Heart left ventricle (tissue), 16 donors: ENCODE measurements at regions of chr14 and their contacts with region 1.

Region 1: GRCh38 chr14:67269298-67270061 is 28.2 kb downstream of the PALS1 start:
- DNase-seq: peak in 1 of 5 donors; percentile 21
- ATAC-seq: peak in 3 of 4 donors; percentile 38 to 65 (median 56)
- H3K4me3 ChIP-seq: peak overlapping the region in 5 of 12 donors; percentile 11 to 39 (median 30)
- H3K27ac ChIP-seq: peak overlapping the region in 6 of 12 donors; percentile 5 to 78 (median 30)
- H3K4me1 ChIP-seq: peaks cover 0 to 46% (median 33%) of the 10 kb centered on the region in 12 donors
- H3K27me3 ChIP-seq: no peaks in the 10 kb centered on the region
- CTCF ChIP-seq: no peak
- POLR2A ChIP-seq: no peak

Region 2: GRCh38 chr14:66752109-66752508 is 517.4 kb before region 1 on chr14:
- intact Hi-C with region 1: loop called in 1 of 10 experiments (anchors 10 kb)
- DNase-seq: no peak
- ATAC-seq: no peak
- H3K4me3 ChIP-seq: no peak overlapping the region
- H3K27ac ChIP-seq: no peak overlapping the region
- H3K4me1 ChIP-seq: peaks cover 0 to 6% (median 0%) of the 10 kb centered on the region in 12 donors
- H3K27me3 ChIP-seq: no peaks in the 10 kb centered on the region
- CTCF ChIP-seq: no peak
- POLR2A ChIP-seq: no peak